ENCODE measurements at regions of chr3 and their contacts with region 1.

Region 1: GRCh38 chr3:33131331-33132018 is 17.7 kb downstream of the CRTAP start:
- DNase-seq: peak; percentile 54
- ATAC-seq: peak; percentile 63
- H3K4me3 Mint-ChIP-seq: no peak overlapping the region
- H3K27ac Mint-ChIP-seq: no peak overlapping the region
- H3K4me1 Mint-ChIP-seq: peaks cover 10% of the 10 kb centered on the region
- H3K27me3 Mint-ChIP-seq: no peaks in the 10 kb centered on the region

Region 2: GRCh38 chr3:33041909-33042308 is 89.6 kb before region 1 on chr3:
- CTCF ChIA-PET with region 1: no interaction called
- POLR2A ChIA-PET with region 1: no interaction called
- intact Hi-C with region 1: no loop called
- DNase-seq: no peak
- ATAC-seq: no peak
- H3K4me3 Mint-ChIP-seq: no peak overlapping the region
- H3K27ac Mint-ChIP-seq: no peak overlapping the region
- H3K4me1 Mint-ChIP-seq: peaks cover 44% of the 10 kb centered on the region
- H3K27me3 Mint-ChIP-seq: no peaks in the 10 kb centered on the region

Region 3: GRCh38 chr3:33146791-33147445 is 15.4 kb after region 1 on chr3:
- CTCF ChIA-PET with region 1: interaction called, 21 read pairs
- POLR2A ChIA-PET with region 1: no interaction called
- intact Hi-C with region 1: no loop called
- DNase-seq: no peak
- ATAC-seq: no peak
- H3K4me3 Mint-ChIP-seq: no peak overlapping the region
- H3K27ac Mint-ChIP-seq: no peak overlapping the region
- H3K4me1 Mint-ChIP-seq: no peaks in the 10 kb centered on the region
- H3K27me3 Mint-ChIP-seq: no peaks in the 10 kb centered on the region

Region 4: DNA sequence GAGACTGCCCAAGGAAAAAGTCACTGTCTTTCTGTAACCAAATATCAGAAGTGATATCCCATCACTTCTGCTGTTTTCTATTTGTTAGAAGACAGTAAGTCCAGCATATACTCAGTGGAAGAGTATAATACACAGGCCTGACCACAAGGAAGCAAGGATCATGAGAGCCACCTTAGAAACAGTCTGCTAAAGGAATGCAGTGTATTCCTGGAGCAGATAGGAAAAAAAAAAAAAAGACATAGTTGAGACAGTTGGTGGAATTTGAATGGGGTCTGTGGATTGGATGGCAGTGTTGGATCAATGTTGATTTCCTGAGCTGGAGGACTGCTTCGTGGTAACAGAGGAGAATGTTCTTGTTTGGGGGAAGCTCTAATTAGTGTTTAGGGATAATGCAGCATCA is 119.2 kb after region 1 on chr3:
- CTCF ChIA-PET with region 1: no interaction called
- POLR2A ChIA-PET with region 1: no interaction called
- intact Hi-C with region 1: loop called in 1 of 2 experiments (anchors 5 kb)
- DNase-seq: no peak
- ATAC-seq: no peak
- H3K4me3 Mint-ChIP-seq: no peak overlapping the region
- H3K27ac Mint-ChIP-seq: no peak overlapping the region
- H3K4me1 Mint-ChIP-seq: no peaks in the 10 kb centered on the region
- H3K27me3 Mint-ChIP-seq: peaks cover 13% of the 10 kb centered on the region

Region 5: GRCh38 chr3:33372218-33373081 is 241.0 kb after region 1 on chr3:
- CTCF ChIA-PET with region 1: interaction called, 81 read pairs
- POLR2A ChIA-PET with region 1: interaction called, 3 read pairs
- intact Hi-C with region 1: loop called (anchors 1 kb)
- DNase-seq: peak; percentile 62
- ATAC-seq: peak; percentile 98
- H3K4me3 Mint-ChIP-seq: no peak overlapping the region
- H3K27ac Mint-ChIP-seq: no peak overlapping the region
- H3K4me1 Mint-ChIP-seq: peaks cover 11% of the 10 kb centered on the region
- H3K27me3 Mint-ChIP-seq: peaks cover 13% of the 10 kb centered on the region

Region 6: DNA sequence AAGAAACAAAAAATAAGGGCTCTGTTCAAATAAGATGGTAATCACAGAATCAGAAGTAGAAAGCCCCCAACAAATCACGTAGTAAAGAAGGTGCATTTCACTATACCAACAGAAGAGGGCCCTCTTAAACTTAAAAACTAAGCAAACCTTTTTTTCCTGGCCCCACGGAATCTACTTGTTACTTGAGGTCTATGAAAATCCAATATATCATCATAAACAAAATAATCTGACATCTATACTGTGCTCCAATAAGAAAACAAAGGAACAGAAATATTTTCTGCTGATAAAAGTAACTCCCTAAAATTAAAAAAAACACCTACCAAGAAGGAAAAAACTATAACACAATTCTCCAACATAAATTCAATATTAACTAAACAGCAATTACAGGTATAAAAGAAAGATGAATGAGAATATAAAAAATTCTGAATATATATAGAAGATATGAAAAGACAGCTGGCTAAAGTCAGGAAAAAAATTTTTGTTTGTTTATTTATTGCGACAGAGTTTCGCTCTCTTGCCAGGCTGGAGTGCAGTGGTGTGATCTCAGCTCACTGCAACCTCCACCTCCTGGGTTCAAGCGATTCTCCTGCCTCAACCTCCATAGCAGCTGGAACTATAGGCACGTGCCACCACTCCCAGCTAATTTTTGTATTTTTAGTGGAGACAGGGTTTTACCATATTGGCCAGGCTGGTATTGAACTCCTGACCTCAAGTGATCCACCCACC is 504.8 kb after region 1 on chr3:
- CTCF ChIA-PET with region 1: no interaction called
- POLR2A ChIA-PET with region 1: no interaction called
- intact Hi-C with region 1: loop called in 1 of 2 experiments (anchors 5 kb)
- DNase-seq: no peak
- ATAC-seq: no peak
- H3K4me3 Mint-ChIP-seq: no peak overlapping the region
- H3K27ac Mint-ChIP-seq: no peak overlapping the region
- H3K4me1 Mint-ChIP-seq: no peaks in the 10 kb centered on the region
- H3K27me3 Mint-ChIP-seq: no peaks in the 10 kb centered on the region

Region 7: GRCh38 chr3:33787328-33788009 is 656.0 kb after region 1 on chr3:
- CTCF ChIA-PET with region 1: interaction called, 13 read pairs
- POLR2A ChIA-PET with region 1: no interaction called
- intact Hi-C with region 1: loop called (anchors 1 to 2 kb)
- DNase-seq: peak; percentile 72
- ATAC-seq: peak; percentile 87
- H3K4me3 Mint-ChIP-seq: peak overlapping the region; percentile 36
- H3K27ac Mint-ChIP-seq: no peak overlapping the region
- H3K4me1 Mint-ChIP-seq: peaks cover 7% of the 10 kb centered on the region
- H3K27me3 Mint-ChIP-seq: peaks cover 6% of the 10 kb centered on the region